ENCODE measurements at regions of chr20 and their contacts with region 1.

Region 1: DNA sequence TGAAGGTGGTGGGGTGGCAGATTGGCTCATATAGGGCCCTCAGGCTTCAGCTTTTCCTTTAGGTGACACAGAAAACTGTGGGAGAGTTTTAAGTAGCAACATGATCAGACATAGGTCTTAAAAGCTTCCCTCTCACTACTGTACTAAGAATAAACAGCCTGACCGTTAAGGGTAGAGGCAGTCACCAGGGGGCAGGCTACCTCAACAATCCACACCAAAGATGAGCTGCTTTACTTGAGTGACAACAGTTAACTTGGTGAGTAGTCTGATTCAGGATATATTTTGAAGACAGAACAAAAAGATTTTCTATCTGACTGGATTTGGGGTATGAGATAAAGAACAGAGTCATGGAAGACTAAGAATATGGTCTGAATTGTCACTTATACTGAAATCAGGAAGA is 193.1 kb upstream of the SHLD1 start:
- DNase-seq: peak; percentile 82

Region 2: DNA sequence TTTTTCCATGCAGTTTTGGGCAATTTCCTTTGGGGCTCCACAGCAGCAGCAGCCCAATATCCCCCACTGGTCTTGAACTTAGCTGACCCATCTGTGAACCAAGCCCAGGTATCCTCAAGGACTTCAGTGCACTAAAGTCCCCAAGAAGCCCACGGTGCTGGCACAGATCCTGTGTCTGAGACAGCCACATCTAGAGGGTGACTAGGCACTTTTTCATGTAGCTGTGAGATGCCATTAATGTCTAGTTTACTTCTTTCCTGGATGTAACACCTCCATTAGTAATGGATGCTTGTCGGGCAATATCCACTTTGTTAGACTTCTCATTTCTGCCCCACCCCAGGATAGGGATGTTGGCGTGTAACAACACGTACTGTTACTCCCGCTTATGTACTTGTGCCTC is 64.2 kb before region 1 on chr20:
- in situ Hi-C with region 1: no loop called
- DNase-seq: no peak

Region 3: GRCh38 chr20:5788385-5788895 is 231.3 kb after region 1 on chr20:
- in situ Hi-C with region 1: loop called (anchors 25 kb)
- DNase-seq: peak; percentile 88